ENCODE measurements at regions of chr1 and their contacts with region 1.

Region 1: GRCh38 chr1:29181413-29182225 is at the start of gene SRSF4:
- DNase-seq: peak; percentile 94
- ATAC-seq: peak; percentile 93
- H3K4me3 ChIP-seq: peak within 1 kb of the TSS; percentile 97
- H3K27ac ChIP-seq: peak within 1 kb of the TSS; percentile 99
- H3K4me1 ChIP-seq: no peaks in the 10 kb centered on the region; the same call in none of the 2 replicates
- H3K27me3 ChIP-seq: no peaks in the 10 kb centered on the region
- CTCF ChIP-seq: peak; percentile 55 to 95 (median 63); a peak in 4 of 6 replicates
- EP300 ChIP-seq: no peak
- POLR2A ChIP-seq: peak; percentile 85
- RAD21 ChIP-seq: no peak
- polyA plus RNA-seq, gene SRSF4: 17.2 to 26.4 TPM

Region 2: DNA sequence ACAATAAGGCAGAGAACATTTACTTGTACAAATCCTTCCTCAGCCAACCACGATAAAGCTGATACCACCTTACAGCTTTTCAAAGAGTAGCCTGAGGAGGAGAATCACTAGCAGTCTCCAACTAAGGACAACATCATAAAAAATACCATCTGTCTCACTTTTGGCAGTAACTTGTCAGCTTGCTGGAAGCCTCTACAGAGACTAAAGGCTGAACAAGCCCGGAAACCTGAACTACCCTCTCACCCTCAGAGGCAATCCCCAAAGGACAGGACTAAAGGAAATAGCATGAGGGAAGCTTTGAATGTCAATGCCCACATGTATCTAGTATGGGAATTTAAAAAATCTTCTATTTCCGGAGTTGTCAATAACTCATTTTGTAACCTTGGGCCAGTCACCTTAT is 10.5 kb before region 1 on chr1:
- CTCF ChIA-PET with region 1: interaction called, 11 read pairs
- POLR2A ChIA-PET with region 1: interaction called, 50 read pairs
- RAD21 ChIA-PET with region 1: interaction called, 22 read pairs
- SMC1A ChIA-PET with region 1: interaction called, 27 read pairs
- in situ Hi-C with region 1: no loop called
- intact Hi-C with region 1: no loop called
- DNase-seq: peak; percentile 20
- ATAC-seq: peak; percentile 64
- H3K4me3 ChIP-seq: peak overlapping the region; percentile 20; the same call in 1 of the 2 replicates
- H3K27ac ChIP-seq: no peak overlapping the region; the same call in 1 of the 2 replicates
- H3K4me1 ChIP-seq: peaks cover 5% of the 10 kb centered on the region; the same call in 1 of the 2 replicates
- H3K27me3 ChIP-seq: no peaks in the 10 kb centered on the region
- CTCF ChIP-seq: no peak
- EP300 ChIP-seq: no peak
- POLR2A ChIP-seq: no peak
- RAD21 ChIP-seq: no peak

Region 3: GRCh38 chr1:29197585-29197924 is 15.9 kb after region 1 on chr1:
- CTCF ChIA-PET with region 1: interaction called, 44 read pairs
- POLR2A ChIA-PET with region 1: interaction called, 10 read pairs
- RAD21 ChIA-PET with region 1: interaction called, 34 read pairs
- SMC1A ChIA-PET with region 1: interaction called, 47 read pairs
- in situ Hi-C with region 1: no loop called
- intact Hi-C with region 1: no loop called
- DNase-seq: no peak
- ATAC-seq: peak; percentile 97
- H3K4me3 ChIP-seq: no peak overlapping the region
- H3K27ac ChIP-seq: no peak overlapping the region
- H3K4me1 ChIP-seq: peaks cover 2% of the 10 kb centered on the region; the same call in 1 of the 2 replicates
- H3K27me3 ChIP-seq: no peaks in the 10 kb centered on the region
- CTCF ChIP-seq: peak; percentile 32 to 55 (median 47); a peak in 5 of 6 replicates
- EP300 ChIP-seq: no peak
- POLR2A ChIP-seq: no peak
- RAD21 ChIP-seq: peak; percentile 41

Region 4: DNA sequence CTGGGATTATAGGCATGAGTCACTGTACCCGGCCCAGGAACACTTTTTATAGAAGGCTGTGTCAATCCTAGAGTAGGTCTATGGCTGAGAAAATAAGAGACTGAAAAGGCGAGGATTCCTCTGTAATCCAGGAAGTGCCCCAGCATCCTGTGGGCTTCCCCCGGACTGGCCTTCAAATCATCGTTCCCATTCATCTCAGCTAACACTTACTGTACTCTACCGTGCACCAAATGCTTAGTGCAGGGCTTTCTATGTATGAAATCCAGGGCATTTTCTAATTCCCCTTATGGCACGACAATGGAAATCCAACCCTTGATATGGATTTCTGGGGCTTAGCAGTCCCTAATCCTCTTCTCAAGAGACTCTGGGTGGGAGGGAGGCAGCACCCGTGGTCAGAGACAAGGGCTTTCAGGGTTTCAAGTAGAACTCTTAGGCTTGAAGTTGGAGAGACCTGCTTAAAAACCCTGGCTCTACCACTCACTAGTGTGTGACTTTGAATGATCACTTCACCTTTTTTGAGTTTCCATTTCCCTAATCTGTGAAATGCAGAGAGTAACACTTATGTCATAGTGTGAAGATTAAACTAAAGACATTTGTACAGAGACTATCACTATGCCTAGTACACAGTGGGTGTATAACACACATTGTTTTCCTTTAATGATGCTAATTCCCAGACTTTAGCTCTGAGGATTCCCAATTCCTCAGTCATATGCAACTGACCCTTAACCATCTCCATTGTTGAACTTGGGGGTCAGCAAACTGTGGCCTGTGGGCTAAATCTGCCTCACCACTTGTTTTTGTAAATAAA is 28.9 kb after region 1 on chr1:
- CTCF ChIA-PET with region 1: interaction called, 5 read pairs
- POLR2A ChIA-PET with region 1: interaction called, 7 read pairs
- RAD21 ChIA-PET with region 1: interaction called, 3 read pairs
- SMC1A ChIA-PET with region 1: interaction called, 3 read pairs
- in situ Hi-C with region 1: no loop called
- intact Hi-C with region 1: loop called (anchors 2 kb)
- DNase-seq: peak; percentile 16
- ATAC-seq: peak; percentile 95
- H3K4me3 ChIP-seq: no peak overlapping the region
- H3K27ac ChIP-seq: peak overlapping the region; percentile 75
- H3K4me1 ChIP-seq: peaks cover 13% of the 10 kb centered on the region; the same call in 1 of the 2 replicates
- H3K27me3 ChIP-seq: no peaks in the 10 kb centered on the region
- CTCF ChIP-seq: no peak
- EP300 ChIP-seq: peak; percentile 15 to 54; a peak in 1 of 4 replicates
- POLR2A ChIP-seq: no peak
- RAD21 ChIP-seq: no peak